Posterior vena cava (tissue), 2 donors: ENCODE measurements at regions of chr10 and their contacts with region 1.

Region 1: GRCh38 chr10:132808383-132809231 is 22.7 kb upstream of the NKX6-2 start:
- DNase-seq: peak; percentile 77

Region 2: GRCh38 chr10:132264966-132265901 is 543.4 kb before region 1 on chr10:
- intact Hi-C with region 1: loop called in 1 of 2 experiments (anchors 5 kb)
- DNase-seq: peak; percentile 79

Region 3: GRCh38 chr10:132588301-132589013 is 220.2 kb before region 1 on chr10:
- intact Hi-C with region 1: no loop called
- DNase-seq: no peak

Region 4: GRCh38 chr10:132984801-132985545 is 176.4 kb after region 1 on chr10:
- intact Hi-C with region 1: no loop called
- DNase-seq: peak; percentile 76

Region 5: DNA sequence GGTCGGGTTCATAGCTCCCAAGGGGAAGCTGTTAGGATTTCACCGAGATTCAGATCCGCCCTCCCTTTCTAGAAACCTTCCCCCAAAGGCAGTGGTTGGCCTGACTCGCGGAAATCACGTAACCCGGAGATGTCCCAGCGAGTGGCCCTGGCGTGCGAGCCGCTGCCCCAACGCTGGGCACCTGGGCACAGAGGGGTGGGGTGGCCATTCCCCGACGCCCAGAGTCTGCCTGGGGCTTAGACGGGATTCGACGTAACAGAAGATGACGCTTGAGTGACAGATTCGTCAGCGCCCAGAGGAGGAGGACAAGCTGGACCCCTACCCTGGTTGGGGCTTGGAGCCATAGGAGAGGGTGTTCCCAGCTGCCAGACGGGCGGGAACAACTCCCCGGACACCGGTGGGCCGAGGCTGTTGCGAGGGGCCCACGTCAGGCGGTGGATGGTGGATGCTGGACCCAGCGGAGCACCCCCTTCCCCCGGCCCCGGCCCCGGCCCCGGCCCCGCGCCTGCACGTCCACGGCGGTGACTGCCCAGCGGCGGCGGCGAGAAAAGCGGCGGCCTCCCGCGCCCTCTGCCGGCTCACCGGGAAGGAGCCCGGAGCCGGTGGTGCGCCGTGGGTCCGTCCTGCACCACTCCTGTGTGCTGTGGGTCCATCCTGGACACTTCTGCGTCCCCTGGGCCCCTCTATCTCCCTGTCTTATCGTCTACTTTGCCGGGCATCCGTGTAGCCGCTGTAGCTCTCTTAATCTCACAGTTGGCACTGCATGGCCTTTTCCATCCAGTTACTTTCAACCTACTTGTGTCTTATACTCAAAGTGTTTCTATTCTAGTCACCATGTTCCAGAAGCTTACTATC is 316.0 kb after region 1 on chr10:
- intact Hi-C with region 1: no loop called
- DNase-seq: peak; percentile 79